Right lobe of liver (tissue), 6 donors: ENCODE measurements at regions of chr19 and their contacts with region 1.

Region 1: GRCh38 chr19:54029930-54030490 is 33.7 kb downstream of the VSTM1 start:
- DNase-seq: peak in 2 of 3 donors; percentile 41 to 53
- ATAC-seq: peak; percentile 57 to 75 (median 66)
- H3K4me3 ChIP-seq: no peak overlapping the region
- H3K27ac ChIP-seq: no peak overlapping the region
- H3K4me1 ChIP-seq: no peaks in the 10 kb centered on the region
- H3K27me3 ChIP-seq: no peaks in the 10 kb centered on the region
- CTCF ChIP-seq: peak; percentile 41 to 53 (median 48)
- POLR2A ChIP-seq: no peak

Region 2: GRCh38 chr19:53849237-53849676 is 180.8 kb before region 1 on chr19:
- intact Hi-C with region 1: loop called (anchors 10 kb)
- DNase-seq: peak in 1 of 3 donors; percentile 44
- ATAC-seq: peak; percentile 48 to 71 (median 61)
- H3K4me3 ChIP-seq: no peak overlapping the region
- H3K27ac ChIP-seq: peak overlapping the region in 1 of 3 donors; percentile 47
- H3K4me1 ChIP-seq: no peaks in the 10 kb centered on the region
- H3K27me3 ChIP-seq: no peaks in the 10 kb centered on the region
- CTCF ChIP-seq: no peak
- POLR2A ChIP-seq: no peak

Region 3: DNA sequence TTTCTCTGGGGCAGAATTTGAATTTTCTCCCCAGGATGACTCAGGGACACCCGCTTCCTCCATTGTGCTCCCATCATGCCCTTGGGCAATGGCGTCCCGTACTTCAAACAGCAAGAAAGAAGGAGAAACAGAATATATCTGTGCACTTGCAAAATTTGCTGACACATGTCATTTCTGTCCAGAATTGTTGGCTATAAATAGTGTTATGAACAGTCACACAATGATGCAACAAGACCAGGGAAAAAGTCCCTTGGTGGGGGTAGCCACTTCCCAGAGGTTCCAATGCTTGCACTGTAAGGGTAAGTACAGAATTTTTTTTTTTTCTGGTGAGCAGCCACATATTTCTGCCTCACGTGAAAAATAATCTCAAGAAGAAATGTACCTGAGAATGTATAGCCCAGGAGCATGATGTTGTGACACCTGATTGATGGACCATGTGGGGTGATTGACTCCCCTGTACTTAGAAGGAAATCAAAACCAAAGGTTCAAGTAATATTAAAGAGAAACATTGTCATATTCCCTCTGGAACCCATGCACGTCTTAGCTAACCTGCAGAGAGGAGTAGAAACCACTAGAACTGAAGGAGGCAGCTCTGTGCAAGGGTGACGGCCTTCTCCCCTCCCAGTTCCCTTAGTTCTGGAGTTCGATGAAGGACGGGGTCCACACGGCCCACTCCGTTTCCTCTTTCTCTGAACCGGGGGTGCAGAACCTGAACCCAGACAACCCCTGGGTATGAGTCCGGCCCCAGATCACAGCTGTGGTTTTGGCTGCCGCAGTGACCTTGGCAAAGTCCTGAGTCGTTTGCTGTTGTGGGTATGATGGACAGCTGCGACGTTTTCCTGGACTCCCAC is 344.0 kb after region 1 on chr19:
- intact Hi-C with region 1: no loop called
- DNase-seq: no peak
- ATAC-seq: peak; percentile 8 to 41 (median 36)
- H3K4me3 ChIP-seq: no peak overlapping the region
- H3K27ac ChIP-seq: peak overlapping the region in 1 of 3 donors; percentile 23
- H3K4me1 ChIP-seq: no peaks in the 10 kb centered on the region
- H3K27me3 ChIP-seq: no peaks in the 10 kb centered on the region
- CTCF ChIP-seq: no peak
- POLR2A ChIP-seq: no peak